Right ventricle myocardium inferior (tissue), 1 donor: ENCODE measurements at regions of chr9 and their contacts with region 1.

Region 1: DNA sequence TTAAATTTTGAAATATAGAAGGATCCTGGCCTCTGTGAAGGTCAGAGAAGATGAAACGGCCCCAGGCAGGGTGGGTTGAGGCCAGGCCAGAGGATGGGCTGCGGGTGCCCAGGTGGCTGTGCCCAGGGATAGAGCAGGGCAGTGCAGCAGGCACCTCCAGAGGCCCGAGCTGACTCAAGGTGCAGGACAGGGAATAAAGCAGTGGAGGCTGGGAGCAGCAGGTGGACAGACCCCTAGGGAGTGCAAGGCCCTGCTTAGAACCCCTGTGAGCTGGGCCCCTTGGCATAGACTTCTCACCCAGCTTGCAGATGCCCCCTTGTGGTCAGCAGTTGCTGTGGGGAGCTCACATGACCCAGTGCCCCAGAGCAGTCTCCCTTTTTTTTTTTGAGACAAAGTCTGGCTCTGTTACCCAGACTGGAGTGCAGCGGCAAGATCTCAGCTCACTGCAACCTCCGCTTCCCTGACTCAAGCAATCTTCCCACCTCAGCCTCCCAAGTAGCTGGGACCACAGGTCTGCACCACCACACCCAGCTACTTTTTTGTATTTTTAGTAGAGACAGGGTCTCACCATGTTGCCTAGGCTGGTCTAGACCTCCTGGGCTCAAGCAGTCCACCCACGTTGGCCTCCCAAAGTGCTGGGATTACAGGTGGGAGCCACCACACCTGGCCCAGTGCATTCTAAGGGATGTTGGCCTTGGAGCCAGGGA is 118.8 kb downstream of the WNK2 start:
- DNase-seq: peak; percentile 65
- ATAC-seq: peak; percentile 12

Region 2: DNA sequence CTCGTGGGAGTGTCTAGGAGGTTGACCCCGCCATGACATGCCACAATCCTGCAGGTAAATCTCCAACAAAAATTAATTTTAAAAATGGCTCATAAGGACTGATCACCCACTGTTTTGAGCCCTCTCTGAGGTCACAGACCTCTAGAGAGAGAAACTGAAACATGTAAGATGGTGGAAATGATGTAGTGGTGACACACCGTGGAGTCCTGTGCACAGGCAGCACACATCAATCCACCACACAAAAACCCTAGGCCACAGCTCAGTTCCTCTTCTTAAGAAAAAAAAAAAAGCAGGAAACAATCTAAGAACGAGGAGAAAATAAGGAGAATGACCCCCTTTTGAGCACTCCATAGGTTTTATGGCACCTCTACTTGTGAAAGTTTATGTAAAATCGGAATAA is 54.9 kb after region 1 on chr9:
- intact Hi-C with region 1: no loop called
- DNase-seq: no peak
- ATAC-seq: no peak

Region 3: GRCh38 chr9:93566408-93567270 is 263.9 kb after region 1 on chr9:
- intact Hi-C with region 1: loop called (anchors 10 kb)
- DNase-seq: peak; percentile 99
- ATAC-seq: peak; percentile 100